Right cardiac atrium (tissue), 5 donors: ENCODE measurements at regions of chr18 and their contacts with region 1.

Region 1: GRCh38 chr18:70195852-70196434 is 9.5 kb downstream of the RTTN start:
- DNase-seq: no peak
- ATAC-seq: peak; percentile 61 to 64
- H3K4me3 ChIP-seq: no peak overlapping the region
- H3K27ac ChIP-seq: no peak overlapping the region
- H3K4me1 ChIP-seq: no peaks in the 10 kb centered on the region
- H3K27me3 ChIP-seq: no peaks in the 10 kb centered on the region

Region 2: GRCh38 chr18:70028734-70029133 is 167.2 kb before region 1 on chr18:
- intact Hi-C with region 1: no loop called
- DNase-seq: no peak
- ATAC-seq: no peak
- H3K4me3 ChIP-seq: no peak overlapping the region
- H3K27ac ChIP-seq: no peak overlapping the region
- H3K4me1 ChIP-seq: no peaks in the 10 kb centered on the region
- H3K27me3 ChIP-seq: no peaks in the 10 kb centered on the region

Region 3: GRCh38 chr18:70431203-70431624 is 235.3 kb after region 1 on chr18:
- intact Hi-C with region 1: loop called (anchors 2 to 5 kb)
- DNase-seq: no peak
- ATAC-seq: no peak
- H3K4me3 ChIP-seq: no peak overlapping the region
- H3K27ac ChIP-seq: no peak overlapping the region
- H3K4me1 ChIP-seq: no peaks in the 10 kb centered on the region
- H3K27me3 ChIP-seq: no peaks in the 10 kb centered on the region

Region 4: GRCh38 chr18:70448588-70448987 is 252.6 kb after region 1 on chr18:
- intact Hi-C with region 1: loop called in 2 of 4 experiments (anchors 5 kb)
- DNase-seq: no peak
- ATAC-seq: no peak
- H3K4me3 ChIP-seq: no peak overlapping the region
- H3K27ac ChIP-seq: no peak overlapping the region
- H3K4me1 ChIP-seq: no peaks in the 10 kb centered on the region
- H3K27me3 ChIP-seq: no peaks in the 10 kb centered on the region

Region 5: DNA sequence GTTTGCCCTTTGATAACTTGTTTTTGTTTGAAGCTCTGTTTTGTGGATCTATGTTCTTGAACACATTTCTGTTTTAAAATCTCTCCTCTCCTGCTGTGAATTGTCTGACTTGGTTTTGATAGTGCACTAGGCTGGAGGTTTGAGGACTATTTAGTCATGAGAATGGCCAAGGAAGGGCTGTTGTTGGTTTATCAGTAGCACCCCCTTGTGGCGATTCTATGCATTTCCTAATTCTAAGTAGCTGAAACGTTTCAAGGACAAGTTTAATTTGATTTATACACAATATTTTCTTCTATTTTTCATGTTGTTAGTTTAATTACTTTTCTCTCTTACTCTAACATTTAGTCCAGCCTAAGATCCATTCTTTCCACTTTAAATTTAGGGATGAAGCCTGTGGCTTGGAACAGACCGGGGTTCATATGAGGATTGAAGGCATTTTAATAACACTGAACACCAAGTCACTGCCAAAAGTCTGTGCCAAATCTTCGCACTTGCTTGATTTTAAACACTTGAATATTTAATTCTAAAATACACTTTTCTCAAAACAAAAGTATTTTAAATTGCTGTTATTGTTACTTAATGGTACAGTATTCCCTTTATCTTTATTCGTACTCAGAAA is 258.9 kb after region 1 on chr18:
- intact Hi-C with region 1: loop called in 1 of 4 experiments (anchors 5 kb)
- DNase-seq: no peak
- ATAC-seq: no peak
- H3K4me3 ChIP-seq: no peak overlapping the region
- H3K27ac ChIP-seq: no peak overlapping the region
- H3K4me1 ChIP-seq: no peaks in the 10 kb centered on the region
- H3K27me3 ChIP-seq: no peaks in the 10 kb centered on the region